ENCODE measurements at regions of chr9 and their contacts with region 1.

Region 1: GRCh38 chr9:17052626-17053025 is 82.2 kb upstream of the CNTLN start:
- DNase-seq: no peak
- H3K4me3 ChIP-seq: no peak overlapping the region
- H3K27ac ChIP-seq: no peak overlapping the region
- H3K4me1 ChIP-seq: no peaks in the 10 kb centered on the region
- H3K27me3 ChIP-seq: no peaks in the 10 kb centered on the region

Region 2: DNA sequence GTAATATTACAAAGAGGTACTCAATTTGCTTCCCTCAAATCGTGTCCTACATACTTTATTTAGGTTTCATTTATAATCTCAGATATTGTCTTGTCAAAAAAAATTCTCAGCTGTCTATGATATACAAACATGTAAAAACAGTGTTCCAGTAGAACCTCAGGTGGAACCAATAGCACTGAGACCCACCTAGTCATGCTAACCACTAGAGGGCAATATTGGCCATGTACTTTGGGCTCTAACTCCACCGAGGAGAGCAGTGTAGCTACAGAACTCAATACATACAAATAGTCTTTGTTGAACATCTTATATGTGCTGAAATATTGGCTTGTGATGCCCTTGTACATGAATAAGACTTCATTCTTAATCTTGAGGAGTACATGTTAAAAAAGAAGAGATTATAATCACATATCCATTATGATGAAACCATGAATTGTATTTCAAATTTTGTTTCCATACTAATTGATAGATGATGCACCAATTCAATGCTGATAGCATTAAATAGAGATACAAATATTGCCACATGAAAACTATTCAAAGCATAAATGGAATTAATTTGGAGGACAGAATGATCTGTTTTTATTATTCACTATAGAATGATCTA is 11.0 kb after region 1 on chr9:
- CTCF ChIA-PET with region 1: interaction called, 12 read pairs
- POLR2A ChIA-PET with region 1: interaction called, 3 read pairs
- DNase-seq: peak; percentile 28 to 64 (median 60)
- H3K4me3 ChIP-seq: no peak overlapping the region
- H3K27ac ChIP-seq: no peak overlapping the region
- H3K4me1 ChIP-seq: no peaks in the 10 kb centered on the region
- H3K27me3 ChIP-seq: no peaks in the 10 kb centered on the region

Measured in common myeloid progenitor, CD34-positive (primary cell).